Ovary (tissue), 10 donors: ENCODE measurements at regions of chrX and their contacts with region 1.

Region 1: DNA sequence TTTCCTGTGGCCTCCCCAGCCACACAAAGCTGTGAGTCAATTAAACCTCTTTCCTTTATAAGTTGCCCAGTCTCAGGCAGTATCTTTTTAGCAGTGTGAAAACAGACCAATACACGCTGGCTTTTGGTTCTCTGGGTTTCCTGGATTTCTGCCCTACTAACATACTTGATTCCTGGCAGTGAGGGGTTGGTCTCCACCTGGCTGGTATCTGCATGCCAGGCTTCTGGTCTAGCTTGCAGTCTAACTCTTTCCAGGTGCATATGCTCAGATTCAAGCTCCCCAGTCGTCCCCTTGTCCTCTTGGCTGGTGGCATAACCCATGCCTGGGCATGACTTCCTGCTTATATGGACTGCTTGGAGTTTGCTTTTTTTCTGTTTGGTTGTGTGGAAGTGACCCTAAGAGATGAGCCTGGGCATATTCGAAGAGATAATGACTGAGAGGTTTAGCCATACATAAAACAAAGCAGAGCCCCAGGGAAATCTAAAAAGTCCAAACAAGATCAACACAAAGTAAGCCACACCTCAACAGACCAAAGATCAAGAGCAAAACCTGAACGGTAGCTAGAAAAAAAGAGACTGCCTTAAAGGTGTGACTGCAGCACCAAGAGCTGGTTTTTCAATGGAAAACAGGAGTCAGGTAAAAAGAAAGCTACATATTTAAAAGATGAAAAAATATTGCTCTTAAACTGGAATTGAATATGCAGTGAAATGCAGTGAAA is 102.1 kb upstream of the STS start:
- DNase-seq: no peak
- H3K4me3 ChIP-seq: no peak overlapping the region
- H3K27ac ChIP-seq: no peak overlapping the region
- H3K4me1 ChIP-seq: no peaks in the 10 kb centered on the region
- H3K27me3 ChIP-seq: no peaks in the 10 kb centered on the region
- CTCF ChIP-seq: no peak
- EP300 ChIP-seq: no peak
- POLR2A ChIP-seq: no peak

Region 2: DNA sequence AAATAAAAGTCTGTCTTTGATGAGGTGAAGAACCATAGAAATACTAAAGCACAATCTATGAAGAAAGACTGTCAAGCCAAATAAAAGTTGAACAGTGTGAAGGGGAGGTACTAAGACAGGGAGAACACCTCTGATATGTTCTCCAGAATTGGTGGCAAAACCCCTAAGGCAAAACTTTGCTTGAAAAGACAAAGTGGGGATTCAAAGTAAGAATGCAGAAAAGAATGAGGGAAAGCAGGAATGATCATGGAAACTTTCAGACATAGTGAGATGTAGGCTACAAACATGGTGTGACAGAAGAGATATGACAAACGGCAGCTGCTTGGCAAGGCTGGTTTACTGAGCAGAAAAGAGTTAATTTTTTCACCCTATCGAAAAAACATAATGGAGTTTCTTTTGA is 51.0 kb before region 1 on chrX:
- intact Hi-C with region 1: loop called in 1 of 4 experiments (anchors 2 kb)
- DNase-seq: no peak
- H3K4me3 ChIP-seq: no peak overlapping the region
- H3K27ac ChIP-seq: no peak overlapping the region
- H3K4me1 ChIP-seq: no peaks in the 10 kb centered on the region
- H3K27me3 ChIP-seq: no peaks in the 10 kb centered on the region
- CTCF ChIP-seq: no peak
- EP300 ChIP-seq: no peak
- POLR2A ChIP-seq: no peak

Region 3: GRCh38 chrX:7019545-7019944 is 25.9 kb before region 1 on chrX:
- intact Hi-C with region 1: no loop called
- DNase-seq: no peak
- H3K4me3 ChIP-seq: no peak overlapping the region
- H3K27ac ChIP-seq: no peak overlapping the region
- H3K4me1 ChIP-seq: no peaks in the 10 kb centered on the region
- H3K27me3 ChIP-seq: no peaks in the 10 kb centered on the region
- CTCF ChIP-seq: no peak
- EP300 ChIP-seq: no peak
- POLR2A ChIP-seq: no peak

Region 4: GRCh38 chrX:7500387-7500786 is 455.0 kb after region 1 on chrX:
- intact Hi-C with region 1: no loop called
- DNase-seq: no peak
- H3K4me3 ChIP-seq: no peak overlapping the region
- H3K27ac ChIP-seq: no peak overlapping the region
- H3K4me1 ChIP-seq: no peaks in the 10 kb centered on the region
- H3K27me3 ChIP-seq: no peaks in the 10 kb centered on the region
- CTCF ChIP-seq: no peak
- EP300 ChIP-seq: no peak
- POLR2A ChIP-seq: no peak